Right ventricle myocardium inferior (tissue), 1 donor: ENCODE measurements at regions of chr20 and their contacts with region 1.

Region 1: GRCh38 chr20:19692685-19693119 is 65.4 kb upstream of the RIN2 start:
- DNase-seq: peak; percentile 79
- ATAC-seq: peak; percentile 22

Region 2: DNA sequence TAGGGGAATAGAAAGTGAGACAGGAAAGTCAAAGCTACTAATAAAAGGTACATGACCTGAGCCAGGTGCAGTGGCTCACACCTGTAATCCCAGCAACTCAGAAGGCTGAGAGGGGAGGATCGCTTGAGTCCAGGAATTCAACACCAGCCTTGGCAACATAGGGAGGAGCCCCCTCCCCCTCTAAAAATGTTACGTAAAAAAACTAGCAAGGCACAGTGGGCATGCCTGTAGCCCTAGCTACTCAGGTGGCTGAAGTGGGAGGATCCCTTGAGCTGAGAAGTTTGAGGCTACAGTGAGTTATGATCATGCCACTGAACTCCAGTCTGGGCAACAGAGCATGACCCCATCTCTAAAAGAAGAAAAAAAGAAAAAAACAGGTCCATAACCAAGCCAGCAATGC is 120.7 kb before region 1 on chr20:
- intact Hi-C with region 1: no loop called
- DNase-seq: no peak
- ATAC-seq: no peak

Region 3: GRCh38 chr20:19757487-19758132 is 64.9 kb after region 1 on chr20:
- intact Hi-C with region 1: loop called (anchors 2 kb)
- DNase-seq: peak; percentile 94
- ATAC-seq: peak; percentile 87

Region 4: DNA sequence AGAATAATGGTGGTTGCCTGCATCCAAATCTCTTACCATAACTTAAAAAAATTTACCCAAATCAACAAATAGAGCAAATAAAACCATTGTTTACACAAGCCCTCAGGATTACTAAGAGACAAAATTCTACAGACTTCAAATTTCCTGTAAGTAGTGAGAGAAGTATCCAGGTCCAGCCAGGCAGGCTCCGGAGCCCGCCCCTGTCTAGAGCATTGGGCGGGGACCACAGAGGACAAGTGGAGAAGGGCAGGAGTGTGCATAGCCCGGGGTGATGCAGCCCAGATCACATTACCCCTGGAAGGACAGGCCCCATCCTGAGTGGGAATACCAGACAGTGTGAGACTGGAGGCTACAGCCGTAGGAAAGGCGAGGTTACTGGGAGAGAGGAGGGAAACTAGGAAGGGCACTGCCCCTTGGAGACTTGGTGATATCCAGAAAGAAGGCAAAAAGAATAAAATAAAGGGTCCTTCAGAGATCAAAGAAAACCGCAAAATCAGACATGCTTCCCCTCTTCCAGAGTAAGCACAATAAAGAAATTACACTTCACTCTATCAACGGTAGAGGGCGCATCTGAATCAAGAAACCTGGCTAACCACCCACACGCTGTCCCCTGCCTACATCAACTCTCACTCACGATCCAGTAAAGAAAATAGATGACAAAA is 91.9 kb after region 1 on chr20:
- intact Hi-C with region 1: loop called (anchors 2 kb)
- DNase-seq: no peak
- ATAC-seq: peak; percentile 78

Region 5: DNA sequence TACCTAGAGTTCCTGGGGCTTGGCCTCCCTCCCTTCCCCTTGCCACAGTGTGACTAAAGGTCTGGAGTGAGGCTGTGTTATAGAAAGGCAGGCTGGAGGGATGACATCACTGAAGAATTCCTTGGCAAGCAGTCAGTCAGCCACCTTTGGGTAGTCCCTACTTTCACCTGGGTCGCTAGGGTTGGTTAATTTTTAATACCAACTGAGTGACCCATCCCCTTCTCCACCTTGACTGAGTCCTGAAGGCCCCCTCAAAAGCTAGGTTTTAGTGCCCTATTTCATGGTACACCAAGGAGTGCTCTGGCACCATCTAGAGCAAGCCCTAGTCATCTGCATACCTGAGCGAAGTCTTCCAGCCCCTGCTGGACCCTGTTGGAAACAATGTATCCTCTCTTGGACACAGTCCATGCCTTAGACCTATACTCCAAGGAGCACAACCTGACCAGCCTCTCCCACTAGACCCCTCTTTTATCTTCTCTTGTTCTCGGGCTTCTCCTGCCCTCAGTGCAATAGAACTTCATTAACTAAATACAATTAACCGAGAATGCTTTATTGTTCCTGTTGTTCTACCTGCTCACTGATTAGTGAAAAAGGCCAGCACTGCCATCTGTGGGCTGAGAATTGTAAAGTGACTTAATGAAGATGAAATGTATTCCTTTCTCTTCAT is 109.9 kb after region 1 on chr20:
- intact Hi-C with region 1: loop called (anchors 1 kb)
- DNase-seq: no peak
- ATAC-seq: peak; percentile 53

Region 6: GRCh38 chr20:19995220-19995863 is 302.6 kb after region 1 on chr20:
- intact Hi-C with region 1: loop called (anchors 2 kb)
- DNase-seq: no peak
- ATAC-seq: no peak